ENCODE measurements at regions of chr11 and their contacts with region 1.

Region 1: GRCh38 chr11:56990702-56991101 is 2.0 kb downstream of the OR5AK2 start:
- DNase-seq: no peak
- ATAC-seq: no peak

Region 2: DNA sequence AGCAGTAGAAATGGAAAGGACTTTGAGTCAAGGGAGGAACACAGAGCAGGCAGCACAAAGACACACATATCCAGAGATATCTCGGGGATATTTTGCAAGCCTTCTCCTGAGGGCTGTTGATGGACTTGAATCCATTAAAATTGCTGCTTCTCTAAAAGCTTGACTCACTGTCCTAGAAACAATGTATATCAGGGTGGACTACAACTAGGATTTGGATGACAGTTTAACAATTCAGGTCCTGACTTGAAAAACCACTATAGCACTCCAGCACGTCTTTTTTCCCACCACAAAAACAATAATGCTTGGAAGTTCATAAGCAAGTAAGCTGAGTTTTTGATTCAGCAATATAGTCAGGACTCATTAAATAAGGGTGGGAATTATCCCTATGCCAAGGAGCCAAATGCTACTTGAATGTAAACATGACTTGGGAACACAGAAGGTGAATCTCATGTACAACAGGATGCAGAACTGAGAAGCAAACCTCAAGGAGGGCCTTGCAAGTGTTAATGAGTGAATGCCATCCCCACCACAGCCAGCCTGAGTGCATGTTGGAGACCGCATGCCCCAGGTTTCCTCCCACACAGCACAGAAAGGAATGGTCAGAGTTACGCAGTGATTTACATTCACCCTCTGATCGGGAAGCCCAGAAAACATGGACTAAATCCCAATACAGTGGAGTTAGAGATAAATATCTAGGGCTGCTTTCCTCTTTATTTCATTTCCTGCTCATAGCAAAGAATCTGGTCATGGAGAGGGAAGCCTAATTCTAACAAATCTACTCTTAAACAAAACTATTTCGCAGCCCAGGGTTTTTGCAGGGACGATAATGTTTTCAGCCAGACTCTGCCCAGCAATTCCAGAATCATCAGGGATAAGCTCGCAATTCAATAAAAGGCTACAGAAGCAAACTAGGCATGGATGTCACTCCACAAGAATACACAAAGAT is 143.8 kb before region 1 on chr11:
- intact Hi-C with region 1: no loop called
- DNase-seq: no peak
- ATAC-seq: no peak

Region 3: GRCh38 chr11:57055764-57056163 is 65.1 kb after region 1 on chr11:
- intact Hi-C with region 1: loop called (anchors 10 kb)
- DNase-seq: no peak
- ATAC-seq: no peak